ENCODE measurements at regions of chr2 and their contacts with region 1.

Region 1: DNA sequence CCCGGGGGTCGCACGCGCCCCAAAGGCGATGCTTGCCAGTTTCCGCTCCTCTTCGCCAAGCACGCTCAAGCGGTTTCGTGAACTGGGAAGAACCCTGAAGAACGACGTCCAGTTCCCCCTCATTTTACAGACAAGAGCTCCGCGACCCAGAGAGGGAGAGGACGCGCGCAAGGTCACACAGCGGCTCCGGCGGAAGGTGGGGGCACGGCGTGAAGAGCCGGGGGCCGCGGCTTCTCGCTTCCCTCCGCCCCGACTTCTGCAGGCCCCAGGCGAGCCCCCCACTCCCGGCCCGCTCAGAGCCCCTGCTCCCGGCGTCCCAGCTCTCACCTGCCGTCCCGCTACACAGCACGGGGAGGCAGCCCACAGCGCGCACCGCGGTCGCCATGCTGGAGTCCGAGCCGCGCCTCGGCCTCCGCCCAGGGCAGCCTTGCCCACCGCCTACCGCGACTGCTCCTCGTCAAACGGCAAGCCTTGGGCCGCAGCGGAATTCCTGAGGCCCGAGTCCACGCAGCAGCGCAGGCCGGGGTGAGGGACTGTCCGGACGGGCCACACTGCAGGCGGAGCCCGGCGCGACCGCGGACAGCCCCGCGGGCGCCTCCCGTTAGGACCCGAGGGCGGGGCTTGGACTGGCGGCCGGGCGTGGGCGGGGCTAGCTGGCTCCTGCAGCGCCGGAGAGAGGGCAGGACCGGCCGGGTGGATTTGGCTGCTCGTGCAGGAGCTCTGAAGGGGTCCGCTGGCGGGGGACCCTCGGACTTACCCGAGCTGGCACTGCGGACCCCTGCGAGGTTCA is at the start of gene MRPS5:
- DNase-seq: peak; percentile 84
- H3K4me3 Mint-ChIP-seq: peak within 1 kb of the TSS; percentile 97
- H3K27ac Mint-ChIP-seq: peak within 1 kb of the TSS; percentile 95
- H3K4me1 Mint-ChIP-seq: peaks cover 46% of the 10 kb centered on the region
- H3K27me3 Mint-ChIP-seq: peaks cover 2% of the 10 kb centered on the region
- total RNA-seq, gene MRPS5: 89.6 and 93.6 TPM in 2 replicates

Region 2: DNA sequence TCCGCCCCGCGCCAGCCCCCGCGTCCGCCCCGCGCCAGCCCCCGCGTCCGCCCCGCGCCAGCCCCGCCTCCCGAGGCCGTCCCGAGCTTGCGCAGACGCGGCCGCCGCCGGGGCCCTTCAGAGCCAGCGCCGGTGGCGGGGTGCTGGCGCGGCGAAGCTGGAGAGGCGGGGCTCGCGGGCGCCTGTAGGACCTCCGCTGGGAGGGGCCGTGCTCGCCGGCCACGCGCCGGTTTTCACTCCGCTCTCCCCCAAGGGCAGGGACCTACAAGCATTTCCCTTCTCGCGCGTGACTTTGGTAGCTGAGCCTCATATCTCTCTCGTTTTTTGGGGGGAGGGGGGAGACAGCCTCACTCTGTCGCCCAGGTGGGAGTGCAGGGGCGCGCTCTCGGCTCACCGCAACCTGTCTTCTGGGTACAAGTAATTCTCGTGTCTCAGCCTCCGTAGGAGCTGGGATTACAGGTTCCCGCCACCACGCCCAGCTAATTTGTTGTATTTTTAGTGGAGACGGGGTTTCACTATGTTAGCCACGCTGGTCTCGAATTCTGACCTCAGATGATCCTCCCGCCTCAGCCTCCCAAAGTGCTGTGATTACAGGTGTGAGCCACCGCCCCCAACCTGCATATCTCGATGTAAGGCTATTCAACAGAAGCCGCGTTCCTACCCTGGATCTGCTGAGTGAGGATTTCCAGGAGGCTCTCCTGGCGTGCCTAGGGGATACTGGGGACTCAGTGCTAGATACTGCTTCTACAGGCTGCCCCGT is 38.3 kb after region 1 on chr2 and contains the start of gene ZNF514:
- intact Hi-C with region 1: loop called (anchors 1 kb)
- DNase-seq: peak; percentile 80
- H3K4me3 Mint-ChIP-seq: peak within 1 kb of the TSS; percentile 90
- H3K27ac Mint-ChIP-seq: peak within 1 kb of the TSS; percentile 91
- H3K4me1 Mint-ChIP-seq: peaks cover 39% of the 10 kb centered on the region
- H3K27me3 Mint-ChIP-seq: no peaks in the 10 kb centered on the region
- total RNA-seq, gene ZNF514: 9.9 and 10.1 TPM in 2 replicates

Region 3: DNA sequence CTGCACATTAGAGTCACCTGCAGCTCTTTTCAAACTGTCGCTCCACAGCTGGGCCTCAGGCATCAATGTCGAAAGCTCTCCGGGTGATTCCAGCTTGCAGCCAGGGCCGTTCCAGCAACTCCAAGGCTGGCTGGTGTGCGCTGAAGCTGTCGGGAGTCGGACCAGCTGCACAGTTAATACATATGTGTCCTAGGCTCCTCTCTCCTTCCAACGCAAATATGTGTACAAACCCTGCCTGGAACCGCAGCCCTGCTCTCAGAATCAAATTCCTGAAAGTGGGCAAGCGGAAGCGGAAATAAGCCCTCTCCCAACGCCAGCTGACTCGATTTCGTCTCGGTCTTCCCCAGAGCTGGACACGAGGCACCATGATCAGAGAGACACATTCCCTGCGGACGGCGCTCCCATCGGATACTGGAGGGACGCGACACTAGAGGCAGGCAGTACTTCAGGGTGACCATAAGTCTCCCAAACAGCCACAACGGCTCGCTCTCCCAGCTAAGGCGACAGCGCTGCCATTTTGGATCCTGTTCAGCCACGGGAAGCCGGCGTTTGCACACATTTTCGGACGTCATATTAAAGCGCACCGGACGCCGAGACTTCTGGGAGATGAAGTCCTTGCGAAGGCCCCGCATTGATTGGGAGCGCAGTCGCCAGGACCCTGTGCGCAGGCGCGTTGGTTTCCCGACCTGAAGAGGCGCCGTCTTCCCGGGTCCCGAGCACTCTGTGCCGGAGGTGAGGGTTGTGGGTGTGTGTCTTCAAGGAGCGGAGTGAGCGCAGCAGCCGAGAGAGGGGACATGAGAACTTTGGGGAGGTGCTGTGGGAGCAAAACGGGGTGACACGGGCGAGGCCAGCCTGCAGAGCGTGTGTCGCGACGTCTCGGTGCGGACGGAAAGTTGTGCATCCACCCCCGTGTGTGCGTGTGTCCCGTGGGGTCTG is 43.8 kb after region 1 on chr2 and contains the start of gene ZNF2:
- intact Hi-C with region 1: loop called (anchors 2 kb)
- DNase-seq: peak; percentile 96
- H3K4me3 Mint-ChIP-seq: peak within 1 kb of the TSS; percentile 99
- H3K27ac Mint-ChIP-seq: peak within 1 kb of the TSS; percentile 92
- H3K4me1 Mint-ChIP-seq: peaks cover 42% of the 10 kb centered on the region
- H3K27me3 Mint-ChIP-seq: no peaks in the 10 kb centered on the region
- total RNA-seq, gene ZNF2: 3.8 and 3.9 TPM in 2 replicates

Region 4: DNA sequence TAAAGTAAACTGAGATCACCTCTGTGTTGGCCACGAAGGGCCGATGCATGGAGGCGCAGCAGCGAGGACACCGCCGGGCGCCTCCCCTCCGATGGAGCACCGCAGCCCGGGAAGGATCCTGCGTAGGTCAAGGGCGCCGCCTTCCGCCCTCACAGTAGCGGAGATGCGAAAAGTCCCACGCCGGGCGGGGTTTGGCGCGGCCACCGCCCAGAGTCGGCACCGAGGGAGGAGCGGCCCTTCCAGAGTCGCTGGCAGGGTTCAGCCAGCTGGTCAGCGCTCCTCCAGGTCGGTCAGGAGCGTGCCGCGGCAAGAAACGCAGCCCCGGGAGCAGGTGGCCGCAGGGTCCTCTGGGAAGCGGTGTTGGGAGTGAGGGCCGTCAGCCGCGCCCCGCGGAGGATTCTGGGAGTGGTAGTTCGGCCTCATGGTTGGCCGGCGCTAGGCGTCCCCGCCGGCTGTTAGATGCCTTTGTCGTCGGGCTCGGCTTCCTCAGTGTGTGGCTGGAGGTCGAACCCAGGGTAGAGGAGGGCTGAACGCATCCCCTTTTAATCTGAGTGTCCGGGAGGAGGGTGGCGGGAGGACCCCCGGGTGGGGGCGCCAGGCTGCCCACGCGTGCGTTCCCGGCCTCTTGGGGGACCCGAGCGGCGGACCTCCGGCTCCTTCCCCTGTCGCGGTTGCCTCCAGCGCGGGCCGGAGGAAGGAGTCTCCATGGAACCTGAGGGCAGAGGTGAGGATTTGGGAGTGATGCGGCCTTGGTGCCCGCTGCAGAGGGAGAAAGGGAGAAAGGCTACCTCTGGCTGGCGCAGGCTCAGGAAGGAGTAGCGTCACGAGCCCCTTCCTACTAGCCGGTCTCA is 85.7 kb after region 1 on chr2 and contains the start of gene ZNF892:
- intact Hi-C with region 1: loop called (anchors 1 kb)
- DNase-seq: peak; percentile 74
- H3K4me3 Mint-ChIP-seq: peak within 1 kb of the TSS; percentile 90
- H3K27ac Mint-ChIP-seq: peak within 1 kb of the TSS; percentile 54
- H3K4me1 Mint-ChIP-seq: peaks cover 30% of the 10 kb centered on the region
- H3K27me3 Mint-ChIP-seq: no peaks in the 10 kb centered on the region
- total RNA-seq, gene ZNF892: 4.7 and 5.9 TPM in 2 replicates

Measured in activated T-helper 1 cell treated with anti-CD3 and anti-CD28 coated beads, Interleukin-12 subunit alpha, Interleukin-12 subunit beta, Interleukin-2, Interleukin-4 antibody, amounts not matched to agents 30 ng/mL and 10 ng/mL and 1 ng/mL, durations not matched to agents 14 hours and 24 hours and 36 hours (primary cell).